PC-3 (cell line): ENCODE measurements at regions of chr16 and their contacts with region 1.

Region 1: DNA sequence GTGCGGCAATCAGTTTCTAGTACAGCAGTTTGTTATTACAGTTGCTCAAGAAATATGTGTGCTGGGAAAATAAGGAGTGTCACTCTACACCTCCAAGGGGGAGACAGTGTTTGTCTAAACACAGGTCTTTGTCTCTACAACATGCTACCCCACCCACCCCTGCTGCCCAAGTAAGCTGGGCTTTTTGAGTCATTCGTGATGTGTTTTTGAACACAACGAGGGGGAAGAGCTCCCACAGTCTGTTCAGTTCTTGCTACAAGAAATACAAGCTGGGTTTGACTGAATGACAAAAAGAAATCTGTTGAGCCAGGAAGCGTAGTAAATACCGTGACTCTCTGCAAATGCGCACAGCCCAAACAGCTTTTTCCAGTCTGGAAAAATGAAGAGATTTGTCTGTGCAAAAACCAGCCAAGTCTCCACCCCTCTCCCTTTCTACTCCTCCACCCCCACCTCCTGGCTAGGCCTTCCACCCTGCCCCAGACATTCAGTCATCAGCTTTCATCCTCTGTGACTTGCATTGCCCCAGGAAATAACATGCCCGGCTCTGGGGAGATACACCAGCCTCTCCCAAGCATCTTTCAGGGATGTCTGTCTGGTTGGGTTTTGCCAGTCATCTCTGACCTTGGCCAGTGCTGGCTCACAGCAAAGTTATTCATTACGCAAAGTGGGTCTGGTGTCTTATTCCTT is 25.7 kb downstream of the CHD9 start:
- DNase-seq: peak; percentile 69
- ATAC-seq: peak; percentile 83
- H3K4me3 ChIP-seq: peak overlapping the region; percentile 47; the same call in 1 of the 2 replicates
- H3K27ac ChIP-seq: peak overlapping the region; percentile 72
- H3K4me1 ChIP-seq: peaks cover 19% of the 10 kb centered on the region
- H3K27me3 ChIP-seq: no peaks in the 10 kb centered on the region
- CTCF ChIP-seq: no peak

Region 2: DNA sequence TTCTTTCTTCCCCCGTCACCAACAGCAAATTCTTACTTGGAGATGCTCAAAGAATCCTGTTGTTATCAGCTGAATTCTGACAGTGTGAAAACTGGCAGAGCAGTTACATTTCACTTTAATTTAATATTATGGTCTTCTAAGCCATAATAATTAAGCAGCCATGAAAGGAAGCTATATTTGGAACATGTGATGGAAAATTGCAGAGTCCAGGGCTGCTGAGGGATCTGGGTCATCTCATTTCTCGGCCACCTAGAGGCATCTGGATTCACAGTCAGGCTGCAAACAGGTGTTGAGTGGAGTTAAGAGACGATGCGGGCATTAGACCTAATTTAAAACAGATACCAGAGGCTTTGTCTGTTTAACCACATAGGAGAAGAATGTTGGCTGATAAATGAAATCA is 66.2 kb before region 1 on chr16:
- CTCF ChIA-PET with region 1: no interaction called
- POLR2A ChIA-PET with region 1: no interaction called
- intact Hi-C with region 1: no loop called
- DNase-seq: no peak
- ATAC-seq: no peak
- H3K4me3 ChIP-seq: no peak overlapping the region
- H3K27ac ChIP-seq: no peak overlapping the region
- H3K4me1 ChIP-seq: no peaks in the 10 kb centered on the region
- H3K27me3 ChIP-seq: no peaks in the 10 kb centered on the region; the same call in 1 of the 2 replicates
- CTCF ChIP-seq: no peak

Region 3: GRCh38 chr16:53099318-53100130 is 19.0 kb after region 1 on chr16:
- CTCF ChIA-PET with region 1: no interaction called
- POLR2A ChIA-PET with region 1: no interaction called
- intact Hi-C with region 1: loop called (anchors 1 kb)
- DNase-seq: peak; percentile 92
- ATAC-seq: peak; percentile 84
- H3K4me3 ChIP-seq: peak overlapping the region; percentile 43
- H3K27ac ChIP-seq: peak overlapping the region; percentile 98
- H3K4me1 ChIP-seq: peaks cover 17% of the 10 kb centered on the region
- H3K27me3 ChIP-seq: no peaks in the 10 kb centered on the region
- CTCF ChIP-seq: no peak